Caco-2 (cell line): ENCODE measurements at regions of chr13 and their contacts with region 1.

Region 1: DNA sequence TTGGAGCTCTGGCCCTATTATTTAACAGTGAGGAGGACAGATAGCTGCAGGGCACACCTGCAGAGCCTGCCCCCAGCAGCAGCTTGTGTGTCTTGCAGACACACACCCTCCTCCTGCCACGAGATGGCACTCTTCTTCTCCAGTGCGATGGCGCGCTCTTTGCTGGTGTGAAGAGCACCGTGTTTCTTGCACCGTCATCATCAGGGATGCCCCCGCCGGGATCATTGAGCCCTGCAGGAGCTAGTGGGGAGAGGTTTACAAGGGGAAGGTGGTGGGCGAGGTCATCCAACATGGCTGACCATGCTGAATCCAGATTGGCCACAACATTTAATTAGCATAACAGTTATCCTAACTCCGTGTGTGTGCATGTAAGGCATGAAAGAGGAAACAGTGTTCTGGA is 105.6 kb downstream of the RAB20 start:
- DNase-seq: peak; percentile 89 to 93
- H3K4me3 ChIP-seq: peak overlapping the region; percentile 21; the same call in 1 of the 2 replicates
- H3K4me3 Mint-ChIP-seq: peak overlapping the region; percentile 34
- H3K27ac Mint-ChIP-seq: peak overlapping the region; percentile 67
- H3K4me1 ChIP-seq: peaks cover 23% of the 10 kb centered on the region
- H3K4me1 Mint-ChIP-seq: peaks cover 33% of the 10 kb centered on the region
- H3K27me3 ChIP-seq: no peaks in the 10 kb centered on the region
- H3K27me3 Mint-ChIP-seq: no peaks in the 10 kb centered on the region
- CTCF ChIP-seq: peak; percentile 90 to 96

Region 2: GRCh38 chr13:109058082-109058481 is 1397.9 kb before region 1 on chr13:
- CTCF ChIA-PET with region 1: no interaction called
- POLR2A ChIA-PET with region 1: no interaction called
- intact Hi-C with region 1: no loop called
- DNase-seq: no peak
- H3K4me3 ChIP-seq: no peak overlapping the region
- H3K4me3 Mint-ChIP-seq: no peak overlapping the region
- H3K27ac Mint-ChIP-seq: no peak overlapping the region
- H3K4me1 ChIP-seq: no peaks in the 10 kb centered on the region
- H3K4me1 Mint-ChIP-seq: no peaks in the 10 kb centered on the region
- H3K27me3 ChIP-seq: no peaks in the 10 kb centered on the region
- H3K27me3 Mint-ChIP-seq: peaks cover 18% of the 10 kb centered on the region
- CTCF ChIP-seq: no peak

Region 3: DNA sequence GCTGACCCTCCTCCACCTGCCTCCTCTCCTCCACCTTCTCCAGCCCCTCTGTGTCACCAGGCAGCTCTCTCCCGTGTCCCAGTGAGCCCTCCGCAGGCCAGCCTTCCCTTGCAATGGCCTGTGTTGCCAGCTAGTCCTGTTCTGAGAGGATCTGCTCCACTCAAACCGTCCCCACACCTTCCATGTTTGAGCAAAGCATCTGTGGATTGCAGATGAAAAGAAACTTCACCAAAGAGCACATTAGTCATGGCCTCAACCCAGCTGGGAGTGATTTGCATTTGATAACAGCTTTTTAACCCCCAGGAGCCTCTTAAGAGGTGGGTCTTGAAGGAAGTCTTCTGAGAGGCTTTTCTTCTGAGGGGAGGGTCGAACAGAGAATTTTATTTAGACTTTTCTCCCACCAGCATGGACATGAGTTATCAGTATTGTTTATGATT is 76.0 kb before region 1 on chr13:
- CTCF ChIA-PET with region 1: no interaction called
- POLR2A ChIA-PET with region 1: no interaction called
- intact Hi-C with region 1: loop called (anchors 2 kb)
- DNase-seq: peak in 1 of 2 experiments; percentile 29
- H3K4me3 ChIP-seq: no peak overlapping the region
- H3K4me3 Mint-ChIP-seq: no peak overlapping the region
- H3K27ac Mint-ChIP-seq: peak overlapping the region; percentile 54
- H3K4me1 ChIP-seq: peaks cover 11% of the 10 kb centered on the region
- H3K4me1 Mint-ChIP-seq: peaks cover 15% of the 10 kb centered on the region
- H3K27me3 ChIP-seq: no peaks in the 10 kb centered on the region
- H3K27me3 Mint-ChIP-seq: no peaks in the 10 kb centered on the region
- CTCF ChIP-seq: no peak

Region 4: DNA sequence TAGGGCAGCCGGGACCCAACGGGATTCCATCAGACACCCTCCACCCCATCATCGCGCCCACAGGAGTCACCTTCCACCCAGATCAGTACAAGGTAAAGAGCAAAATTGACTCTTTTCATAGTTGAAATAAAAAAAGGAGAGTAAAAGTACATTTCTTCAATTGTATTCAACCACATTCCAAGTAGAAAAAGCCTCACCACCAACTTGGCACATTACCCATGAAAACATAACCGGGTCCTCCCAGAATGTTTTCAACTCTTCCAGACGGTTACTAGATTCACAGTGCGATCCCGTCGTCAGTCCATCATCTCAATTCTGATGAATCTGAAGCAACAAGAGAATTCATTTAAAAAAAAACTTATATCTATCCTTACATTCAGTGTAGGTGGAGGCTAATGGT is 19.7 kb before region 1 on chr13:
- CTCF ChIA-PET with region 1: no interaction called
- POLR2A ChIA-PET with region 1: no interaction called
- intact Hi-C with region 1: no loop called
- DNase-seq: no peak
- H3K4me3 ChIP-seq: no peak overlapping the region
- H3K4me3 Mint-ChIP-seq: no peak overlapping the region
- H3K27ac Mint-ChIP-seq: no peak overlapping the region
- H3K4me1 ChIP-seq: peaks cover 3% of the 10 kb centered on the region
- H3K4me1 Mint-ChIP-seq: no peaks in the 10 kb centered on the region
- H3K27me3 ChIP-seq: no peaks in the 10 kb centered on the region
- H3K27me3 Mint-ChIP-seq: no peaks in the 10 kb centered on the region
- CTCF ChIP-seq: no peak

Region 5: GRCh38 chr13:110509971-110510786 is 54.2 kb after region 1 on chr13:
- CTCF ChIA-PET with region 1: interaction called, 10 read pairs
- POLR2A ChIA-PET with region 1: no interaction called
- intact Hi-C with region 1: loop called (anchors 1 kb)
- DNase-seq: peak in 1 of 2 experiments; percentile 37
- H3K4me3 ChIP-seq: no peak overlapping the region
- H3K4me3 Mint-ChIP-seq: no peak overlapping the region
- H3K27ac Mint-ChIP-seq: peak overlapping the region; percentile 69
- H3K4me1 ChIP-seq: peaks cover 53% of the 10 kb centered on the region
- H3K4me1 Mint-ChIP-seq: peaks cover 43% of the 10 kb centered on the region
- H3K27me3 ChIP-seq: no peaks in the 10 kb centered on the region
- H3K27me3 Mint-ChIP-seq: no peaks in the 10 kb centered on the region
- CTCF ChIP-seq: no peak

Region 6: DNA sequence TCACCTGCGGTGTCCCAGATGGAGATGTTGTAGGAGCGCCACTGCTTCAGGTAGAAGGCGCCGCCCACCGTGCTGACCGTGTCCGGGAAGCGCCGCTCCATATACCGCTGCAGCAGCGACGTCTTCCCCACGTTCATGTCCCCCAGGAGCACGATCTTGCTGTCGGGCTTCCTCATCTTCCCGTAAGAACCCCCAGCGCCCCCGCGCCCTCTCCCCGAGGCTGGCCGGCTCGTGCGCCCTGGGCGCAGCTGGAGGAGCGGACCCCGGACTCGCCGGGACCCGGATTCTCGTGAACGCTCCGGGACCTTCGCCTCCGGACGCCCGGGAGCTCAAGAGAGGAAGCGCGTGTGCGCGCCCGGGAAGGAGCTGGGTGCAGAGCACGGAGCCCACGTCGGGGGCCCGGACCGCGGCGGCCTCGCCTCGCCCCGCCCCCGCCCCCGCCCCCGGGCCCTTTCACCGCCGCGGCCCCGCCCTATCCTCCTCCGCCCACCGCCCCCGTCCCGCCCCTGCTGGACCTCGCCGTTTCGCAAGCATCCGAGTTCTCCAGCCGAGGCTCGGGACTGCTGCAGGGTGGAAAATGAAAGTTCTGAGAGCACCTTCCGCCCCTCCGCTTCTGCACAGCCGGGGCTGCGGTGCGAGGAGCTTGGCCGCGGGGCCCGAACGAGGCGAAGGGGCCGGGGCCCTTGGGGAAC is 105.5 kb after region 1 on chr13 and contains the start of gene RAB20:
- CTCF ChIA-PET with region 1: interaction called, 20 read pairs
- POLR2A ChIA-PET with region 1: interaction called, 5 read pairs
- intact Hi-C with region 1: no loop called
- DNase-seq: peak; percentile 92 to 94
- H3K4me3 ChIP-seq: peak within 1 kb of the TSS; percentile 84
- H3K4me3 Mint-ChIP-seq: peak within 1 kb of the TSS; percentile 85
- H3K27ac Mint-ChIP-seq: peak within 1 kb of the TSS; percentile 75
- H3K4me1 ChIP-seq: peaks cover 32% of the 10 kb centered on the region
- H3K4me1 Mint-ChIP-seq: peaks cover 35% of the 10 kb centered on the region
- H3K27me3 ChIP-seq: no peaks in the 10 kb centered on the region
- H3K27me3 Mint-ChIP-seq: no peaks in the 10 kb centered on the region
- CTCF ChIP-seq: no peak
- total RNA-seq, gene RAB20: 37.9 and 40.1 TPM in 2 replicates

Region 7: DNA sequence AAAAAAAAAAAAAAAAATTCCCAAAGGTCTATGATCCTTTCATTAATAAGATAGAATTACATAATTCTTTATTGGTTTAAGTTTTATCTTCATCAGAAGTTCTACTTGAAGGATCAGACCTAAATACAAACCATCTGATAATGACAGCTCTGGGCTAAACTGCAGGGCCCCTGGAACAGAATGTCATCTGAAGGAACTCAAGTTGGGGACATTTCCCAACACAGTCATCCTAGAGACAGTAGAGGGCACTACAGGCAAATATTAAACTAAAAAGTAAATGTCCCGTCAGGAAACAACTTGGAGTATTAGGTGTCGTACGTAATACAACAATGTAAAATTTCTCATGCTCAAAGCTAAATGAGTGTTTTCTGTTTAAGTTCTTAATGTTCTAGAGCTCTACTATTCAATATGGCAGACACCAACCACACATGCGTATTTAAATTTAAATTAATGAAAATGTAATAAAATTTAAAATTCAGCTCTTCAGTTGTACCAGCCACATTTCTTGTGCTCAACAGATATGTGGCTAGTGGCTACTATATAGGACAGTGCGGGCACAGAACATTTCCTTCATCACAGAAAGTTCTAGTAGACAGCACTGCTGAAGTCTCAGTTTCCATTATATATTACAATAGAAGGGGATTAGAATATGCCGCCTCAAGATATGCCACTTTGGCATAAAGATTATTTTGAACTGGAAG is 137.6 kb after region 1 on chr13:
- CTCF ChIA-PET with region 1: interaction called, 8 read pairs
- POLR2A ChIA-PET with region 1: no interaction called
- intact Hi-C with region 1: loop called (anchors 5 kb)
- DNase-seq: peak in 1 of 2 experiments; percentile 67
- H3K4me3 ChIP-seq: no peak overlapping the region
- H3K4me3 Mint-ChIP-seq: no peak overlapping the region
- H3K27ac Mint-ChIP-seq: no peak overlapping the region
- H3K4me1 ChIP-seq: peaks cover 12% of the 10 kb centered on the region
- H3K4me1 Mint-ChIP-seq: peaks cover 23% of the 10 kb centered on the region
- H3K27me3 ChIP-seq: no peaks in the 10 kb centered on the region
- H3K27me3 Mint-ChIP-seq: no peaks in the 10 kb centered on the region
- CTCF ChIP-seq: peak; percentile 63 to 64

Region 8: GRCh38 chr13:110715395-110716235 is 259.7 kb after region 1 on chr13:
- CTCF ChIA-PET with region 1: no interaction called
- POLR2A ChIA-PET with region 1: interaction called, 3 read pairs
- intact Hi-C with region 1: loop called (anchors 2 kb)
- DNase-seq: peak; percentile 98 to 100
- H3K4me3 ChIP-seq: peak overlapping the region; percentile 93
- H3K4me3 Mint-ChIP-seq: peak overlapping the region; percentile 100
- H3K27ac Mint-ChIP-seq: peak overlapping the region; percentile 96
- H3K4me1 ChIP-seq: peaks cover 16% of the 10 kb centered on the region; the same call in 1 of the 2 replicates
- H3K4me1 Mint-ChIP-seq: peaks cover 17% of the 10 kb centered on the region
- H3K27me3 ChIP-seq: no peaks in the 10 kb centered on the region
- H3K27me3 Mint-ChIP-seq: peaks cover 2% of the 10 kb centered on the region
- CTCF ChIP-seq: peak in 1 of 2 experiments; percentile 18